ENCODE measurements at regions of chr7 and their contacts with region 1.

Region 1: DNA sequence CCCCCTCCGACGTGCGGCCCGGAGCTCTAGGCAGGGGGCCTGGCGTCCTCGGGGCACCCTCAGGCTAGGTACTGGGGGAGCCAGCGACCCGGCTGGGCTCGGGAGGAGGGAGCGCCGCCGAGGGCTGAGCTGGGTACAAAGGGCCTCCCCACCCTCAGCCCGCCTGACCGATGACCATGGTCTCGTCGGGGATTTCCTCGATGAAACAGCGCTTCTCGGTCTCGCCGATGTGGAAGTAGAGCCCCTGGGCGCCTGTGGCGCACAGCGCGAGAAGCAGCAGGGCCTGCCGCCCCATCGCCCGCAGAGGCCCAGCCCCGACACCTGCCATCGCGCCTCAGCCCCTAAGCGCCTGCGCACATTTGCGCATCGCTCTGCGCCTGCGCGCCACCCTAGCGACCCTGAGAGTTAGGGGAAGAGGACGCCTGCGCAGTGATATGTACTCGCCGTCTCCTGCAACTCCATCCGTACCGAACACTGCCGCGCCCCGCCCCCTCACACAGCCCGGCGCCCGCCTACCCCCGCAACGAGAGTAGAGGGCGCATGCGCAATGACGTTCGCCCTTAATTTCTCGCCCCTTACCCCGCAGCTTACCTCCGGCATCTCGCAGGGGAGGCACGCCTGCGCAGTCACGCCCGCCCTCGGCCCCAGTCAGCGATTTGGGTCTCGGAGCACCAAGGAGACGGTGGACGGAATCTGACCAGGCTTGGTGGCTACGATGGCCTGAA is at the start of gene TMED4:
- DNase-seq: peak; percentile 100
- ATAC-seq: peak; percentile 96
- H3K4me3 ChIP-seq: peak within 1 kb of the TSS; percentile 95
- H3K4me3 Mint-ChIP-seq: peak within 1 kb of the TSS; percentile 86 to 97 (median 92)
- H3K27ac ChIP-seq: peak within 1 kb of the TSS; percentile 90
- H3K27ac Mint-ChIP-seq: peak within 1 kb of the TSS; percentile 95 to 99 (median 98)
- H3K4me1 ChIP-seq: peaks cover 14 to 19% of the 10 kb centered on the region in 2 donors
- H3K4me1 Mint-ChIP-seq: peaks cover 13 to 43% (median 38%) of the 10 kb centered on the region in 7 donors
- H3K27me3 ChIP-seq: no peaks in the 10 kb centered on the region
- H3K27me3 Mint-ChIP-seq: peaks cover 0 to 12% (median 0%) of the 10 kb centered on the region in 5 donors
- total RNA-seq, gene TMED4: 70.0 to 98.5 (median 95.3) TPM

Region 2: GRCh38 chr7:42931834-42932651 is 1650.0 kb before region 1 on chr7 and contains the starts of genes MRPL32 and PSMA2:
- CTCF ChIA-PET with region 1: no interaction called
- POLR2A ChIA-PET with region 1: no interaction called
- intact Hi-C with region 1: loop called in 1 of 2 experiments (anchors 1 kb)
- DNase-seq: peak; percentile 83 to 97 (median 94)
- ATAC-seq: peak; percentile 99
- H3K4me3 ChIP-seq: peak within 1 kb of the TSS; percentile 100
- H3K4me3 Mint-ChIP-seq: peak within 1 kb of the TSS; percentile 88 to 100 (median 98)
- H3K27ac ChIP-seq: peak within 1 kb of the TSS; percentile 89
- H3K27ac Mint-ChIP-seq: peak within 1 kb of the TSS; percentile 92 to 100 (median 97)
- H3K4me1 ChIP-seq: peaks cover 24 to 48% of the 10 kb centered on the region in 2 donors
- H3K4me1 Mint-ChIP-seq: peaks cover 31 to 93% (median 71%) of the 10 kb centered on the region in 7 donors
- H3K27me3 ChIP-seq: no peaks in the 10 kb centered on the region
- H3K27me3 Mint-ChIP-seq: no peaks in the 10 kb centered on the region
- total RNA-seq, gene MRPL32: 27.7 to 58.2 (median 53.4) TPM
- total RNA-seq, gene PSMA2: 29.3 to 144 (median 35.3) TPM

Region 3: DNA sequence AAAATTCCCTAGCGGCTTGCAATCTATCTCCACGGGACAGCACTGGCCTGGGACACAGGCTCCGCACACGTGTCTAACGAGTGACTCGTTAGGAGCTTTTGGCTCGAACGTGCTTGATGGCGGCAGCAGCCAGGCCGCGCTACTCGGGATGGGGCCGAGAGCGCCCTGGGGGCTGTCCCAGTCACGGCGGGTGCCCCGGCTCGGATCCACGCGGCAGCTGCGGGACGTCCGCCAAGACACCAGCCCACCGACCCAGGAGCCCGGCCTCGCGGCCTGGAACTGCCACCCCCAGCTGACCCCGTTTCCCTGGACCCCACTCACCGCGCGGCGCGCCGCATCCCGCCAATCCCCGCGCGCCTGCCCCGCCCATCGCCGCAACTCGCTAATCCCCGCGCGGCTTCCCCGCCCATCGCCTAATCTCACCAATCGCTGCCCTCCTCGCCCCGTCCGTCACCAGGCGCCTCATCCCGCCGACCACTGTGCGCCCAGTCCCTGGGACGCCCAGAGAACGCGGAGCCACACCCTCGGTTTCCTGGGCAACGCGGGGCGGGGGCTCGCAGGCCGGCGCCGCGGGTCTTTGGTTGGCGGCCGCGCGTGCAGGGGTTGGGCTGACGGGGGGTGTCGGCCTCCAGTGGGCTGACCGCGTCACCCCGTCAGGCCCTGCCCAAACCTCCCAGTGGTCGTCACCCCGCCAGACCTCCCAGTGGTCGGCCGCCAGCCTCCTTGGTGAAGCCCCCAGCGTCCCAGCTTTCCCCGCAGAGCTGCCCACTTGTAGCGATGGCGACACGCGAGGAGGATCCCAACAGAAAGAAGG is 458.6 kb before region 1 on chr7 and contains the start of gene POLD2:
- CTCF ChIA-PET with region 1: no interaction called
- POLR2A ChIA-PET with region 1: no interaction called
- intact Hi-C with region 1: loop called in 1 of 2 experiments (anchors 5 kb)
- DNase-seq: peak; percentile 88 to 99 (median 94)
- ATAC-seq: peak; percentile 99
- H3K4me3 ChIP-seq: peak within 1 kb of the TSS; percentile 89
- H3K4me3 Mint-ChIP-seq: peak within 1 kb of the TSS; percentile 82 to 97 (median 93)
- H3K27ac ChIP-seq: peak within 1 kb of the TSS; percentile 74
- H3K27ac Mint-ChIP-seq: peak within 1 kb of the TSS; percentile 40 to 96 (median 87)
- H3K4me1 ChIP-seq: peaks cover 8 to 9% of the 10 kb centered on the region in 2 donors
- H3K4me1 Mint-ChIP-seq: peaks cover 18 to 40% (median 39%) of the 10 kb centered on the region in 7 donors
- H3K27me3 ChIP-seq: no peaks in the 10 kb centered on the region
- H3K27me3 Mint-ChIP-seq: peaks cover 0 to 23% (median 0%) of the 10 kb centered on the region in 5 donors
- total RNA-seq, gene POLD2: 55.1 to 118 (median 69.2) TPM

Region 4: GRCh38 chr7:44565097-44565794 is 16.8 kb before region 1 on chr7:
- CTCF ChIA-PET with region 1: interaction called, 4 read pairs
- POLR2A ChIA-PET with region 1: interaction called, 18 read pairs
- intact Hi-C with region 1: no loop called
- DNase-seq: peak; percentile 25 to 72 (median 57)
- ATAC-seq: peak; percentile 92
- H3K4me3 ChIP-seq: no peak overlapping the region
- H3K4me3 Mint-ChIP-seq: no peak overlapping the region
- H3K27ac ChIP-seq: peak overlapping the region; percentile 41
- H3K27ac Mint-ChIP-seq: peak overlapping the region; percentile 3 to 83 (median 42)
- H3K4me1 ChIP-seq: no peaks in the 10 kb centered on the region
- H3K4me1 Mint-ChIP-seq: peaks cover 5 to 20% (median 11%) of the 10 kb centered on the region in 7 donors
- H3K27me3 ChIP-seq: no peaks in the 10 kb centered on the region
- H3K27me3 Mint-ChIP-seq: no peaks in the 10 kb centered on the region

Region 5: GRCh38 chr7:44606450-44607254 is 24.6 kb after region 1 on chr7 and contains the start of gene OGDH:
- CTCF ChIA-PET with region 1: interaction called, 3 read pairs
- POLR2A ChIA-PET with region 1: interaction called, 46 read pairs
- intact Hi-C with region 1: loop called (anchors 1 kb)
- DNase-seq: peak; percentile 99 to 100 (median 100)
- ATAC-seq: peak; percentile 95
- H3K4me3 ChIP-seq: peak within 1 kb of the TSS; percentile 71
- H3K4me3 Mint-ChIP-seq: peak within 1 kb of the TSS; percentile 81 to 99 (median 98)
- H3K27ac ChIP-seq: peak within 1 kb of the TSS; percentile 93
- H3K27ac Mint-ChIP-seq: peak within 1 kb of the TSS; percentile 93 to 100 (median 98)
- H3K4me1 ChIP-seq: peaks cover 13 to 17% of the 10 kb centered on the region in 2 donors
- H3K4me1 Mint-ChIP-seq: peaks cover 0 to 45% (median 37%) of the 10 kb centered on the region in 7 donors
- H3K27me3 ChIP-seq: no peaks in the 10 kb centered on the region
- H3K27me3 Mint-ChIP-seq: peaks cover 0 to 20% (median 0%) of the 10 kb centered on the region in 5 donors
- total RNA-seq, gene OGDH: 43.1 to 122 (median 66.3) TPM

Region 6: DNA sequence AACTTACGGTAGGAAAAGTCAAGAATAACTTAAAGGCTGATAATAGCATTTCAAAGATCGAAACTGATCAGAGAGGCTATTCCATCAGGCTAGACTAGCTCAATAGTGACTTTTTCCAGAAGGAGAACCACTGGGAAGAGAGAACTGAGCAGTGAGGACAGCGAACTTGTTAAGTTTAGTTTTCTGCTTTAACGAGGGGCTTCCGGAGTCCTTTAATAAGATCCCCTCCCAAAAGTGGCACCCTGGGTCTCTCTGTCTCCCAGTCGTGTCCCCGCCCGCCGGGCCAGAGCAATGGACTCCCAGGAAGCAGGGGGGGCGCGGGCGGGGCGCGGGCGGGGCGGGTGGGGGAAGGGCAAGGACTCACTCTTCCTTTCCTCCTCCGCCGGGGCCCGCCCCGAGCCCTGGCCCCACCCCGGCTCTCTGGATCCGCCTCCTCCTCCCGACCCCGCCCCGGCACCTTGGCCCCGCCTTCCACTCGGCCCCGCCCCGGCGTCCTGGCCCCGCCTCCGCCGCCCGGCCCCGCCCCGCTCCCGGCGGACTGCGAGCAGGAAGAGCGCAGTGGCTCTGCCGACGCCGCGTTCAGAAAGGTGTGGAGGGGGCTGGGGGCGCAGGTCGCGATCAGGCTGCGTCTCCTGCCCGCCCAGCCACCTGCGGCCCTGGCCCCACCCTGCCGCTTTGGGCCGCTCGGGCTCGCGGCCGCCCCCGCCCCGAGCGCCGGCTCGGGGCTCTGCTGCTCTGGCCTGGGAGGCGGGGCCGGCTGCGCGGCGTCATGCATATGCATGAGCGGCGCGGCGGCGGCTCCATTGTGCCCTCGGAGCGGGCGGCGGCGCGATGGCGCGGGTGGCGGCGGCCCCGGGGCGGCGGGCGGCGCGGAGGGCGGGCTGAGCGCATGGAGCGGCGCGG is 166.3 kb after region 1 on chr7 and contains the start of gene ZMIZ2:
- CTCF ChIA-PET with region 1: no interaction called
- POLR2A ChIA-PET with region 1: interaction called, 13 read pairs
- intact Hi-C with region 1: loop called (anchors 1 to 2 kb)
- DNase-seq: peak; percentile 87 to 99 (median 93)
- ATAC-seq: peak; percentile 94
- H3K4me3 ChIP-seq: peak within 1 kb of the TSS; percentile 64
- H3K4me3 Mint-ChIP-seq: peak within 1 kb of the TSS; percentile 77 to 92 (median 88)
- H3K27ac ChIP-seq: peak within 1 kb of the TSS; percentile 98
- H3K27ac Mint-ChIP-seq: peak within 1 kb of the TSS; percentile 81 to 98 (median 92)
- H3K4me1 ChIP-seq: peaks cover 21 to 22% of the 10 kb centered on the region in 2 donors
- H3K4me1 Mint-ChIP-seq: peaks cover 22 to 63% (median 45%) of the 10 kb centered on the region in 7 donors
- H3K27me3 ChIP-seq: no peaks in the 10 kb centered on the region
- H3K27me3 Mint-ChIP-seq: no peaks in the 10 kb centered on the region
- total RNA-seq, gene ZMIZ2: 108 to 187 (median 144) TPM

Region 7: GRCh38 chr7:44858161-44858560 is 276.1 kb after region 1 on chr7:
- CTCF ChIA-PET with region 1: no interaction called
- POLR2A ChIA-PET with region 1: no interaction called
- intact Hi-C with region 1: no loop called
- DNase-seq: no peak
- ATAC-seq: no peak
- H3K4me3 ChIP-seq: no peak overlapping the region
- H3K4me3 Mint-ChIP-seq: no peak overlapping the region
- H3K27ac ChIP-seq: no peak overlapping the region
- H3K27ac Mint-ChIP-seq: peak overlapping the region in 1 of 9 donors; percentile 9
- H3K4me1 ChIP-seq: peaks cover 0 to 4% of the 10 kb centered on the region in 2 donors
- H3K4me1 Mint-ChIP-seq: peaks cover 0 to 21% (median 5%) of the 10 kb centered on the region in 7 donors
- H3K27me3 ChIP-seq: no peaks in the 10 kb centered on the region
- H3K27me3 Mint-ChIP-seq: peaks cover 0 to 6% (median 0%) of the 10 kb centered on the region in 5 donors

Region 8: GRCh38 chr7:44944821-44945220 is 362.8 kb after region 1 on chr7:
- CTCF ChIA-PET with region 1: no interaction called
- POLR2A ChIA-PET with region 1: no interaction called
- intact Hi-C with region 1: no loop called
- DNase-seq: no peak
- ATAC-seq: no peak
- H3K4me3 ChIP-seq: no peak overlapping the region
- H3K4me3 Mint-ChIP-seq: no peak overlapping the region
- H3K27ac ChIP-seq: no peak overlapping the region
- H3K27ac Mint-ChIP-seq: no peak overlapping the region
- H3K4me1 ChIP-seq: no peaks in the 10 kb centered on the region
- H3K4me1 Mint-ChIP-seq: no peaks in the 10 kb centered on the region
- H3K27me3 ChIP-seq: no peaks in the 10 kb centered on the region
- H3K27me3 Mint-ChIP-seq: peaks cover 0 to 57% (median 0%) of the 10 kb centered on the region in 5 donors

Region 9: DNA sequence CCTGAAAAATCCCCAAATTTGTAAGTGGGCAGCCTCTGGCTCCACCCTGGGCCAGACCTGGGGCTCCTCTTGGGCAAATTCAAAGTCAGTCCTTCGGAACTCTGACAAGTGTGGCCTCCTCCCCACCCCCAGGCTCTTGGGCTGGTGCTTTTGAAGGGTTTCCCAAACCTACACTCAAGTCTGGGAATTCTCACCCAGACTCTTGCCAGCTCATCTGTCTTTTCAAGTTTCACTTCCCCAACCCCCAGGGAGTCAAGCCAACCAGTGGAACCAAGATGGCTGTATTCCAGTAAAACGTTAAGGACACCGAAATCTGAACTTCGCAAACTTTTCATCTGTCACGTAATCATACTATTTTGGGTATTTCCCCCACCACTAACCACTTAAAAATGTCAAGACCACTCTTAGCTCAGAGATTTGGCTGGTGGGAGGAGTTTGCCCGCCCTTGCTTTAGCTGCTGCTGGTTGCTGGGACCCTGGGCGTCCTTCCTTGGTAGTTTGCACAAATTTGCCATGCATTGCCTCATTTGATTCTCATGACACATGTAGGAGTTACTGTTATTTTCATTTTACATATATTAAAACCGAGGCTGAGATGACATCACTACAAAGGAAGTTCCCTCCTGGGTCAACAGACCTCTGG is 398.5 kb after region 1 on chr7:
- CTCF ChIA-PET with region 1: no interaction called
- POLR2A ChIA-PET with region 1: no interaction called
- intact Hi-C with region 1: loop called (anchors 2 to 5 kb)
- DNase-seq: peak in 2 of 9 donors; percentile 63 to 69
- ATAC-seq: peak; percentile 38
- H3K4me3 ChIP-seq: peak overlapping the region; percentile 78
- H3K4me3 Mint-ChIP-seq: peak overlapping the region; percentile 39 to 100 (median 70)
- H3K27ac ChIP-seq: peak overlapping the region; percentile 83
- H3K27ac Mint-ChIP-seq: peak overlapping the region; percentile 85 to 99 (median 96)
- H3K4me1 ChIP-seq: peaks cover 60 to 63% of the 10 kb centered on the region in 2 donors
- H3K4me1 Mint-ChIP-seq: peaks cover 54 to 96% (median 68%) of the 10 kb centered on the region in 7 donors
- H3K27me3 ChIP-seq: no peaks in the 10 kb centered on the region
- H3K27me3 Mint-ChIP-seq: no peaks in the 10 kb centered on the region

Measured in naive thymus-derived CD4-positive, alpha-beta T cell (primary cell).